ENCODE measurements at regions of chr4 and their contacts with region 1.

Region 1: GRCh38 chr4:125314676-125315575 is at the start of gene FAT4:
- DNase-seq: peak; percentile 97
- H3K4me3 ChIP-seq: peak within 1 kb of the TSS; percentile 62 to 85 (median 78)
- H3K27ac ChIP-seq: peak within 1 kb of the TSS; percentile 86 to 95 (median 91)
- H3K4me1 ChIP-seq: peaks cover 23 to 44% (median 41%) of the 10 kb centered on the region in 4 donors
- H3K27me3 ChIP-seq: no peaks in the 10 kb centered on the region
- CTCF ChIP-seq: peak in 1 of 3 experiments; percentile 38
- EP300 ChIP-seq: no peak
- POLR2A ChIP-seq: no peak
- total RNA-seq, gene FAT4: 44.0 to 60.9 (median 49.7) TPM

Region 2: GRCh38 chr4:125389713-125390112 is 74.8 kb after region 1 on chr4:
- intact Hi-C with region 1: loop called (anchors 10 kb)
- DNase-seq: no peak
- H3K4me3 ChIP-seq: peak overlapping the region in 3 of 4 donors; percentile 2 to 15 (median 15)
- H3K27ac ChIP-seq: peak overlapping the region; percentile 74 to 80 (median 76)
- H3K4me1 ChIP-seq: peaks cover 26 to 66% (median 61%) of the 10 kb centered on the region in 4 donors
- H3K27me3 ChIP-seq: no peaks in the 10 kb centered on the region
- CTCF ChIP-seq: no peak
- EP300 ChIP-seq: no peak
- POLR2A ChIP-seq: no peak

Region 3: DNA sequence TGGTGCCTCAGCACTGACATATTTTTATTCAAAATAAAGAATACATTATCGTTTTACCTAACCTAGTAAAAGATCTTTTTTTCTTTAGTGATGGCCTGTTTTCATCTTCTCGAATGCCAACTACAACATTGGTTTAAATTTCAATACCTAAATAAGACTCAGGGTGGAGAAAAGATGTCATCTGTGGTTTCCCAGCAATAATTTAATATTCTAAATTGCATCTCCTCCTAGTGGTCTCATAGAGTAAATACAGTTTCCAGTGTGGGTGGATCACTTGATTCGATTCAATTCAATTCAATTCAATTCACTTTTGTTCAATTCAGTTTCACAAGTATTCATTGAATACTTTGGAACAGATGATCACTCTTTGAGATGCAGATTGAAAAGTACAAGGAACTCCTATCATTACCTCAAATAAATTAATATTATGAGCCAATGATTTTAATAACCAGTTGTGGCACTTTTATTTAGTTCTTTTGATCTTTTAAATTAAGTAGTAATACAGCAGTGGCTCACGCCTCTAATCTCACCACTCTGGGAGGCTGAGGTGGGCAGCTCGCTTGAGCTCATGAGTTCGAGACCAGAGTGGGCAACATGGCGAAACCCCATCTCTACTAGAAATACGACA is 427.0 kb after region 1 on chr4:
- intact Hi-C with region 1: loop called (anchors 2 kb)
- DNase-seq: no peak
- H3K4me3 ChIP-seq: no peak overlapping the region
- H3K27ac ChIP-seq: no peak overlapping the region
- H3K4me1 ChIP-seq: peaks cover 0 to 9% (median 0%) of the 10 kb centered on the region in 4 donors
- H3K27me3 ChIP-seq: no peaks in the 10 kb centered on the region
- CTCF ChIP-seq: peak; percentile 45 to 69 (median 61)
- EP300 ChIP-seq: no peak
- POLR2A ChIP-seq: no peak

Region 4: DNA sequence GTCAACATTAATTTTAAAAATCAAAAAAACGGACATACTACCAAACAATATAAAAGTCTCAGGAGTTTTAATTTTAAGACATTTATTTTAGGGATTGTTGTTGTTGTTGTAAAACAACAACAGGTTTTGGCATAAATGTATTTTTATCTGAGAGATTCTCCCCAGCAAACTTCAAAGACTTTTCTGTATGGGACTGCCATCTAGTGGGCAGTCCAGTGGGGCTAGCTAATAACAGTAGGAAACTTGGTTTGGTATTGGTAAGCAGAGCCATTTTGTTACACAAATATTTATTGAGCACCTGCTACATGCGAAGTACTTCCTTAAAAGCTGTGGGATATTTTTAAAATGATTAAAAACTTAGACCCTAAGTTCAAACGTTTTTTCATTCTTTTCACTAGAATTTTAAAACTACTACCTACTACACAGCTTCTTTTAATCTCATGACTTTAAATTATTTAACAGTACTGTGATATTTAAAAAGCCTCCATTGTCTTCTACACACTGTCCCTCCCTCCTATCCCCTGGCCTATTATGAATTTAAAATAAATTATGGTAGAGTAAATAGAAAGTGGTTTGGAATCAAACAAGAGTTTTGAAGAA is 1289.4 kb after region 1 on chr4:
- intact Hi-C with region 1: loop called (anchors 10 kb)
- DNase-seq: no peak
- H3K4me3 ChIP-seq: no peak overlapping the region
- H3K27ac ChIP-seq: no peak overlapping the region
- H3K4me1 ChIP-seq: peaks cover 0 to 6% (median 0%) of the 10 kb centered on the region in 4 donors
- H3K27me3 ChIP-seq: no peaks in the 10 kb centered on the region
- CTCF ChIP-seq: peak; percentile 48 to 72 (median 55)
- EP300 ChIP-seq: no peak
- POLR2A ChIP-seq: no peak